Activated CD4-positive, alpha-beta memory T cell treated with anti-CD3 and anti-CD28 coated beads for 36 hours (primary cell): ENCODE measurements at regions of chr12 and their contacts with region 1.

Region 1: GRCh38 chr12:108562348-108563135 is at the start of gene ISCU:
- DNase-seq: peak; percentile 99
- H3K4me3 Mint-ChIP-seq: peak within 1 kb of the TSS; percentile 100
- H3K27ac Mint-ChIP-seq: peak within 1 kb of the TSS; percentile 99
- H3K4me1 Mint-ChIP-seq: peaks cover 57% of the 10 kb centered on the region
- H3K27me3 Mint-ChIP-seq: no peaks in the 10 kb centered on the region
- total RNA-seq, gene ISCU: 88.6 to 94.3 TPM

Region 2: DNA sequence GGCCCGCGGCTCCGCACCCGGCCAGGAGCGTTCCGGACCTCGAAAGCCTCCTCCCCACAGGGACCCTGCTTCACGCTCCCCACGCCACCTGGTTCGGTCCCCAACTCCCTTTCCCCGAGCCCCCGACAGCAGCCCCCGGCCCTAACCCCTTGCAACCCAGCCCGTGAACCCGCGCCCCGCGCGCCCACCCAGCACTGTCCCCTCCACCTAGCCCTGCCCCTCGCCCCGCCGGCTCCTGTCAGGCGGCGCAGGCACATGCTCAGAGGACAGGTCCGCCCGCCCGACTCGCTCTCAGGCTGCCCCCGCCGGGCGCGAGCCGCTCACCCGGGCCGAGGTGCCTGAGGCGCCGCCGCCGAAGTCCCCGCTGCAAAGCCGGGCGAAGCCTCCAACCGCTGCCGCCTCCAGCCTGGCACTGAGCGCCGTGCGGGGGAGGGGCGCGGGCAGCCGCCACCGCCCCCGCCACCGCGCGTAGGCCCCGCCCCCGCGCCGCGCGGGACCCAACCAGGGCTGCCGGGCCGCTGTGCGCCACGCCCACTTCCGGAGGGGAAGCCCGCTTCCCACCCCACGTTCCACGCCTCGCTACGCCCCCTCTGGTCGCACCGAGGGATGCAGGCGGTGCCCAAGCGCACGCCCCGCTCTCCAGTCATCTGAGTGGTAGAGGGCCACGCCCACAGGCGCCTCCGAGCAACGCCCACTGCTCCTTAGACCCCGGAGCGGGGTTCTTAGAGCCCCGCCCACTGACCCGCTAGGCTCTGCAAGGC is 168.7 kb after region 1 on chr12 and contains the start of gene CORO1C:
- CTCF ChIA-PET with region 1: no interaction called
- POLR2A ChIA-PET with region 1: no interaction called
- intact Hi-C with region 1: loop called (anchors 1 kb)
- DNase-seq: peak; percentile 97
- H3K4me3 Mint-ChIP-seq: peak within 1 kb of the TSS; percentile 91
- H3K27ac Mint-ChIP-seq: peak within 1 kb of the TSS; percentile 91
- H3K4me1 Mint-ChIP-seq: peaks cover 34% of the 10 kb centered on the region
- H3K27me3 Mint-ChIP-seq: no peaks in the 10 kb centered on the region
- total RNA-seq, gene CORO1C: 62.1 to 70.9 TPM